CD4-positive, alpha-beta memory T cell (primary cell): ENCODE measurements at regions of chr5 and their contacts with region 1.

Region 1: DNA sequence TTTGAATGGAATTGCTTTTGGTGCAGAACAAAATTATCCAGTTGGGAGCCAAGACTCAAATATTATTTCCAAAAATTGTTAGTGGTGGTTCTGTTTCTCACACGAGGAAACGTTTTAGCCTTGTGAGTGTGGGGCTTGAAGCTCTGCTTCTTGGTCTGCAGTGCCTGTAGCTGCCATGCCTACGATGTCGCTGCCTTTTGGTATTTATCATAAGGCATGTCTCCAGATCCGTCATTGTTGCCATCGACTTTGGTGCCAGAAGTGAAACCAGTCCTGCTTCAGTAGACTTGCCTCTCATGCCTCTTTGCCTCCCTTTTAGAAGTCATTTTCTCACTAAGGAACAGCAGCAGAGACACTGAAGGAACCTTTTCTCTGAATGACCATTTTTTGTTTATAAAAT is 29.7 kb upstream of the CATSPER3 start:
- DNase-seq: no peak
- H3K4me3 ChIP-seq: no peak overlapping the region
- H3K4me3 Mint-ChIP-seq: no peak overlapping the region
- H3K27ac ChIP-seq: no peak overlapping the region
- H3K27ac Mint-ChIP-seq: no peak overlapping the region
- H3K4me1 ChIP-seq: no peaks in the 10 kb centered on the region
- H3K4me1 Mint-ChIP-seq: no peaks in the 10 kb centered on the region
- H3K27me3 ChIP-seq: no peaks in the 10 kb centered on the region
- H3K27me3 Mint-ChIP-seq: no peaks in the 10 kb centered on the region

Region 2: DNA sequence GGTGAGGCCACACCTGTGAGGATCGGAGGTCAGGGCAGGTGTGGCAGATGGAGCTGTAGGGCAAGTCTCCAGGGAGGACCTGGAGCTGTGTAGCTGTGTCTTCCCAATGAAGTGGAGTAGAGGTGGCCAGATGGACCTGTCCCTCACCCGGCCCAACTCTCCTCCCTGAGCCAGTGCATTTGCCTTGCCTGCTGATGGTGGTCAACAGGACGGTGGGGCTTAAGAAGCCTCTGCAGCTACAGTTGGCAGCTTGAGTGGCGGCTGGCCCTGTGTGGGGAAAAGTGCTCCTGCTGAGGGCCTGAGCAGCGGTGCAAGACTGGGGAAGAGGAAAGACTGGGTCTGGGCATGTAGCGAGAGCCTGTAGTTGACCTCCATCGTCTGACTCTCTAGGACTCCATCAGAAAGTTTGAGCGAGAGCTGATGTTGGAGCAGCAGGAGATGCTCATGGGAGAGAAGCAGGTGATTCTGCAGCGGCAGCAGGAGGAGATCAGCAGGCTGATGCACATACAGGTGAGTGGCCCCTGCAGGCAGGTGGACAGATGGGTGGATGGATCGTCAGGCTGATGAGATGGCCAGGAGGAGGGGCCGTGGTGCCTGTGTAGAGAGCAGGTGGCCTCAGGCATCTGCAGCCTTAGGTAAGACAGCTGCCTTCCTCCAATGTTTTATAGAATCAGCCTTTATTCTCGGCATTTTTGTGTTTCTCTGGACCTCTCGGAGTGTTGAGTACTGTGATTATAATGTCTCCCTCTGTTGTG is 71.1 kb after region 1 on chr5:
- CTCF ChIA-PET with region 1: no interaction called
- POLR2A ChIA-PET with region 1: no interaction called
- intact Hi-C with region 1: loop called (anchors 2 kb)
- DNase-seq: no peak
- H3K4me3 ChIP-seq: no peak overlapping the region
- H3K4me3 Mint-ChIP-seq: no peak overlapping the region
- H3K27ac ChIP-seq: no peak overlapping the region
- H3K27ac Mint-ChIP-seq: peak overlapping the region in 1 of 7 donors; percentile 15
- H3K4me1 ChIP-seq: no peaks in the 10 kb centered on the region
- H3K4me1 Mint-ChIP-seq: no peaks in the 10 kb centered on the region
- H3K27me3 ChIP-seq: no peaks in the 10 kb centered on the region
- H3K27me3 Mint-ChIP-seq: no peaks in the 10 kb centered on the region